Activated naive CD4-positive, alpha-beta T cell treated with anti-CD3 and anti-CD28 coated beads for 36 hours (primary cell): ENCODE measurements at regions of chr12 and their contacts with region 1.

Region 1: DNA sequence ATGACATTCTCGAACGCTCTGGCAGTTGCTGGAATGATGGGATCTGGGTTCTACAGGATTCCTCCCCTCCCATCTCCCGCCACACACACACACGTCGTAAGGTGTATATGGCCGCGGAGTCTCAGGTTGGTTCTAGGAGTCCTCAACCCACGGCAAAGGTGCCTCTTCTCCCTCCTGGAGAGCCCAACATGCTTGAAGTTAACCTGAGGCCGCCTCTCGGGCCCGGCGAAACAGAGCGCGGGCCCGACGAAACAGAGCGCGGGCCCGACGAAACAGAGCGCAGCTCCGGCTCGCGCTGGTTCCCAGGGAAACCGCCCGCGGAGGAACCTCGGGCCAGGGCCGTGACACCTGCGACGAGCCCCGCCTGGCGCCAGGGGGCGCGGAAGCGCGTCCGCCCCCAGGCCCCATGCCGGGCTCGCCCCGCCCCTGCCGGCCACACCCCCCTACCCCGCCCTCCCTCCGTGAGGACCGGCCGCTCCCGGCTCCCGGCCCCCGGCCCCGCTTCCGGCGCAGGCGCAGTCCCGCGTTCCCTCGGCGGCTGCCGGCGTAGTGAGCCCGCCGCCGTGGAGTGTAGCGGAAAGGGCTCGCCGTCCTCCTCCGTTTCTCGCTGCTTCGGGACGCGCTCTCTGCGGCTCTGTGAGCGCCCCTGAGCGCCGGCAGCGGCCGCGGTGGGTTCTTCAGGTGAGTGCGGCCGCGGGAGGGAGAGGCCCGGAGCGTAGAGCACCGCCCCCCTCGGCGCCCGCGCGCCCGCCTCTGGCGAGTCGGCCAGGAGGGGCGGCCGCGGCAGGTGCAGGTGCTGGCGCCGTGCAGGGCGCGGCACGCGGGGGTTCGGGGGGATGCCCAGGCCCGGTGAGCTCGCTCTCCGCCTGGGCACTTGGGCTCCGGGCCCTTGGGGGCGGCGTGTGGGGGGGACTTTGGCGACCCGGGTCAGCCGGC is at the start of gene RAB3IP:
- DNase-seq: peak; percentile 94
- H3K4me3 Mint-ChIP-seq: peak within 1 kb of the TSS; percentile 77
- H3K27ac Mint-ChIP-seq: peak within 1 kb of the TSS; percentile 75
- H3K4me1 Mint-ChIP-seq: peaks cover 18% of the 10 kb centered on the region
- H3K27me3 Mint-ChIP-seq: no peaks in the 10 kb centered on the region
- total RNA-seq, gene RAB3IP: 23.0 to 25.4 TPM

Region 2: GRCh38 chr12:69239352-69239921 is 499.2 kb before region 1 on chr12 and contains the start of gene CPSF6:
- CTCF ChIA-PET with region 1: no interaction called
- intact Hi-C with region 1: loop called (anchors 1 kb)
- DNase-seq: peak; percentile 97
- H3K4me3 Mint-ChIP-seq: peak within 1 kb of the TSS; percentile 91
- H3K27ac Mint-ChIP-seq: peak within 1 kb of the TSS; percentile 98
- H3K4me1 Mint-ChIP-seq: peaks cover 47% of the 10 kb centered on the region
- H3K27me3 Mint-ChIP-seq: no peaks in the 10 kb centered on the region
- total RNA-seq, gene CPSF6: 73.7 to 75.7 TPM

Region 3: DNA sequence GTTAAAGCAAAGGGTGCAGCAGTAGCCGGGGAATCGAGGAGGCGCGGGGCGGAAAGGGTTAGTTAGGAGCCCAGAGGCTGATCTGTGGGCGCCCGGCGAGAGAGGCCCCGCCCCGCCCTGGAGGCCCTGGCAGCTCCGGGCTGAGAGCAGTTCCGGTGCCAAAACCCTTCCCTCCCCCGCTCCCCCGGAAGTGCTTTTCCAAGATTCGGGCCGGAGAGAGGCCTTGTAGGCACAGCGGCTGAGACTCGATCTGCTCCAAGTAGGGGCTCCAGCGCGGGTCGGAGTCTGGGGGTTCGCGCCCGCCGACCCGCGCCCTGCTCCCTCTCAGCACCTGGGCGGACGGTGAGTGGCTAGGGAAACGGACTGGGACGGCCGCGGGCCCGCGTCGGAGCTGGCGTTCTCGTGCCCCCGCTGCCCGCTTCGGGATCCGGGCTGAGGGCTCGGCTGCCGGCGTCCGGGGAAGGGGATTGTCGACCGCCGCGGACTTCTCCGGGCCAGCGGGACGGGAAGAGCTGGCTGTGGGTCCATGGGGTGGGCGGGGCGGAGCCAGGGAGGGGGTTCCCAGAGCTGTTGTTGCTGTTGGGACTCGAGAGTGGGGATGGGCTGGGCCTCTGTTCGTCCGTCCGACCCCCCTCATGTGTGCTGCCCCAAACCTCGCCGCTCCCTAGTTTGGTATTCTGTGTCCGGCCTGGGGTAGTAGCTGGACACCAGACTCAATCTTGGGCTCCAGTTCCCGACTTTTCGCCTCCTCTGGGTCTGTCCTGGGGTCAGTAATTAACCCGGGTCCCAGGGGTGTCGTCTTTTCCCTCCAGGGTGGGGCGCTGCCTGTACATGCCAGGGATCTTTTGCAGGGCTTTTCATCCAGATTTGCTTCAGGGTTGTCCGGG is 268.2 kb before region 1 on chr12 and contains the start of gene FRS2:
- CTCF ChIA-PET with region 1: no interaction called
- intact Hi-C with region 1: loop called (anchors 2 kb)
- DNase-seq: peak; percentile 93
- H3K4me3 Mint-ChIP-seq: peak within 1 kb of the TSS; percentile 98
- H3K27ac Mint-ChIP-seq: peak within 1 kb of the TSS; percentile 96
- H3K4me1 Mint-ChIP-seq: peaks cover 42% of the 10 kb centered on the region
- H3K27me3 Mint-ChIP-seq: no peaks in the 10 kb centered on the region
- total RNA-seq, gene FRS2: 7.9 TPM

Region 4: GRCh38 chr12:69639400-69640016 is 99.1 kb before region 1 on chr12:
- CTCF ChIA-PET with region 1: interaction called, 3 read pairs
- intact Hi-C with region 1: loop called (anchors 1 kb)
- DNase-seq: peak; percentile 74
- H3K4me3 Mint-ChIP-seq: no peak overlapping the region
- H3K27ac Mint-ChIP-seq: no peak overlapping the region
- H3K4me1 Mint-ChIP-seq: peaks cover 2% of the 10 kb centered on the region
- H3K27me3 Mint-ChIP-seq: no peaks in the 10 kb centered on the region

Region 5: GRCh38 chr12:71685914-71686665 is 1947.5 kb after region 1 on chr12 and contains the start of gene TMEM19:
- CTCF ChIA-PET with region 1: no interaction called
- intact Hi-C with region 1: loop called (anchors 10 kb)
- DNase-seq: peak; percentile 81
- H3K4me3 Mint-ChIP-seq: peak within 1 kb of the TSS; percentile 98
- H3K27ac Mint-ChIP-seq: peak within 1 kb of the TSS; percentile 96
- H3K4me1 Mint-ChIP-seq: peaks cover 27% of the 10 kb centered on the region
- H3K27me3 Mint-ChIP-seq: no peaks in the 10 kb centered on the region
- total RNA-seq, gene TMEM19: 10.9 to 11.1 TPM